Calu3 (cell line): ENCODE measurements at regions of chr7 and their contacts with region 1.

Region 1: GRCh38 chr7:99040104-99040958 is 103.6 kb downstream of the SMURF1 start:
- DNase-seq: peak; percentile 80
- H3K4me3 Mint-ChIP-seq: no peak overlapping the region
- H3K27ac Mint-ChIP-seq: peak overlapping the region; percentile 42
- H3K4me1 Mint-ChIP-seq: peaks cover 10% of the 10 kb centered on the region
- H3K27me3 Mint-ChIP-seq: no peaks in the 10 kb centered on the region
- CTCF ChIP-seq: peak; percentile 42

Region 2: GRCh38 chr7:98974906-98975816 is 65.2 kb before region 1 on chr7:
- CTCF ChIA-PET with region 1: no interaction called
- intact Hi-C with region 1: no loop called
- DNase-seq: no peak
- H3K4me3 Mint-ChIP-seq: no peak overlapping the region
- H3K27ac Mint-ChIP-seq: no peak overlapping the region
- H3K4me1 Mint-ChIP-seq: no peaks in the 10 kb centered on the region
- H3K27me3 Mint-ChIP-seq: no peaks in the 10 kb centered on the region
- CTCF ChIP-seq: no peak

Region 3: DNA sequence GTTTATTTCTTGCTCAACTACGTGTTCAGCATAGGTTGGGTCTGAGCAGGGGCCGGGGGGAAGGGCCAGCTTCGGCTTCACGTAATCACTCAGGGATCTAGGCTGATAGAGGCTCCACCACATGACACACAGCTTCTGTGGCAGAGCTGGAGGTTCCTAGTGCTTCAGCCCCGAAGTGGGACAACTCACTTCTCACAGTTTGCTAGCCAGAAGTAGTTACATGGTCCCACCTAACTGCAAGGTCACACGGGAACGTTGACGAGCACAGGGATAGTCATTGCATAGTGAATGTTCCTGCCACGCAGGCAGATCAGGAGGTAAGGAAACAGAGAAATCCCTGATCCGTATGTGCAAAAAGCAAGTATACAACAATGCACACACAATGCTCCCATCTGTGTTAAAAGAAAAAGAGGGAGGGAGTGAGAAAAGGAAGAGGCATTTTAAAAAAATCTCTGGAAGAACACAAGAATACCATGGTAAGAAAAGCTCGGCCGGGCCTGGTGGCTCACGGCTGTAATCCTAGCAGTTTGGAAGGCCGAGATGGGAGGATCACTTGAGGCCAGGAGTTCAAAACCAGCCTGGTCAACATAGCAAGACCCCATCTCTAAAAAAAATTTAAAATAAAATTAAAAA is 86.7 kb after region 1 on chr7:
- CTCF ChIA-PET with region 1: no interaction called
- intact Hi-C with region 1: loop called (anchors 5 kb)
- DNase-seq: peak; percentile 30
- H3K4me3 Mint-ChIP-seq: peak overlapping the region; percentile 64
- H3K27ac Mint-ChIP-seq: peak overlapping the region; percentile 83
- H3K4me1 Mint-ChIP-seq: peaks cover 63% of the 10 kb centered on the region
- H3K27me3 Mint-ChIP-seq: no peaks in the 10 kb centered on the region
- CTCF ChIP-seq: no peak

Region 4: DNA sequence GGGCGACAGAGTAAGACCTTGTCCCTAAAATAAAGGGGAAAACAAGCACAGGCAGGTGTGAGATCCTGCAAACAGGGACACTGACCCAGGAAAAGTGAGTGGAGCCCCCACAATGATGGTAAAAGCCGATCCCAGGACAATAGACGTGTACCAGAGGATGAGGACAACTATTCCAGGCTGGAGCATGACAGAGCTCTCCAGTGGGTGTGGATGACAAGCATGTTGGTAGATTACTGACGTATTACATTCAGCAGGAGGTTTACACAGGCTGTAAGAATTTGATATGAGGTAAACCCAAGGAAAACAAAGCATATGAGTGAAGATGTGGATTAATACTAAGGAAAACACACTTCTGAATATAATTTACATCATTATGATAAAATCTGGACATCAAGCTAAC is 131.4 kb after region 1 on chr7:
- CTCF ChIA-PET with region 1: no interaction called
- intact Hi-C with region 1: no loop called
- DNase-seq: no peak
- H3K4me3 Mint-ChIP-seq: no peak overlapping the region
- H3K27ac Mint-ChIP-seq: no peak overlapping the region
- H3K4me1 Mint-ChIP-seq: no peaks in the 10 kb centered on the region
- H3K27me3 Mint-ChIP-seq: no peaks in the 10 kb centered on the region
- CTCF ChIP-seq: no peak

Region 5: DNA sequence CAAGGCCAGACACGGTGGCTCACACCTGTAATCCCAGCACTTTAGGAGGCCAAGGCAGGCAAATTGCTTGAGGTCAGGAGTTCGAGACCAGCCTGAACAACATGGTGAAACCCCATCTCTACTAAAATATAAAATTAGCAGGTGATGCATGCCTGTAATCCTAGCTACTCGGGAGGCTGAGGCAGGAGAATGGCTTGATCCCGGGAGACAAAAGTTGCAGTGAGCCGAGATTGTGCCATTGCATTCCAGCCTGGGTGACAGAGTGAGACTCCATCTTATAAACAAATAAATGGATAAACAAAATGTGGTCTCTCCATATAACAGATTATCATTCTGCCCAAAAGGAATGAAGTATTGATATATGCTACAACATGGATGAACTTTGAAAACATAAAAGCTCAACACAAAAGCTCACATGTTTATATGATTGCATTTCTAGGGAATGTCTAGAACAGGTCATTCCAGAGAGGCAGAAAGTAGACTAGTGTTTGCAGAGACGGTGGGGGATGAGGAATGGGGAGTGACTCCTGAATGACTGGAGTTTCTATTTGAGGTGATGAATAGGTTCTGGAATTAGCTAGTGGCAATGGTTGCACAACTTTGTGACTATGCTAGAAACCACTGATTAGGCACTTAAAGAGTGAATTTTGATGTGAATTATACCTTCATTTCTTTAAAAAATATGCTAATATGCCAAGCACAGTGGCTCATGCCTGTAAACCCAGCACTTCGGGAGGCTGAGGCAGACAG is 160.5 kb after region 1 on chr7:
- CTCF ChIA-PET with region 1: no interaction called
- intact Hi-C with region 1: no loop called
- DNase-seq: peak; percentile 57
- H3K4me3 Mint-ChIP-seq: no peak overlapping the region
- H3K27ac Mint-ChIP-seq: peak overlapping the region; percentile 80
- H3K4me1 Mint-ChIP-seq: peaks cover 8% of the 10 kb centered on the region
- H3K27me3 Mint-ChIP-seq: no peaks in the 10 kb centered on the region
- CTCF ChIP-seq: no peak

Region 6: DNA sequence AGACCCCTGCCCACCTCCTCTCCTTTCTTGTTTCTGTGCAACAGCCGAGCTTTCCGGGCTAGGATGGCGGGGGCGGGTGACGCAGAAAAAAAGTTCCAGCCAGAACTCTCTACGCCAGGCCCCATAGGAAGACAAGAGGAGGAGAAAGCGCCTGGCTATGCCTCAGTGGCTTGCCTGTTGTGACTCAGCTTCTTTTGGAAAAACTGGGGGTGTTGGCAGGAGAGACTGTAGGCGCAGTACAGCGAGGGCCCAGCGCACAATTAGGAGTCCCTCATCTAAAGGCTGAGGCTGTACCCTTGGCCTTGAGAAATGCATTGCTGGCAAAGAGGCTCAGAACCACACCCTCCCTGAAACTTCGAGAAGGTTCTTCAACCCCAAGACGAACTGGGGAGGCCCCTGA is 195.6 kb after region 1 on chr7:
- CTCF ChIA-PET with region 1: no interaction called
- intact Hi-C with region 1: loop called (anchors 2 kb)
- DNase-seq: no peak
- H3K4me3 Mint-ChIP-seq: no peak overlapping the region
- H3K27ac Mint-ChIP-seq: no peak overlapping the region
- H3K4me1 Mint-ChIP-seq: no peaks in the 10 kb centered on the region
- H3K27me3 Mint-ChIP-seq: no peaks in the 10 kb centered on the region
- CTCF ChIP-seq: no peak

Region 7: GRCh38 chr7:99312316-99313203 is 272.2 kb after region 1 on chr7:
- CTCF ChIA-PET with region 1: no interaction called
- intact Hi-C with region 1: loop called (anchors 1 kb)
- DNase-seq: peak; percentile 72
- H3K4me3 Mint-ChIP-seq: no peak overlapping the region
- H3K27ac Mint-ChIP-seq: no peak overlapping the region
- H3K4me1 Mint-ChIP-seq: no peaks in the 10 kb centered on the region
- H3K27me3 Mint-ChIP-seq: no peaks in the 10 kb centered on the region
- CTCF ChIP-seq: peak; percentile 61